ENCODE measurements at regions of chr4 and their contacts with region 1.

Region 1: DNA sequence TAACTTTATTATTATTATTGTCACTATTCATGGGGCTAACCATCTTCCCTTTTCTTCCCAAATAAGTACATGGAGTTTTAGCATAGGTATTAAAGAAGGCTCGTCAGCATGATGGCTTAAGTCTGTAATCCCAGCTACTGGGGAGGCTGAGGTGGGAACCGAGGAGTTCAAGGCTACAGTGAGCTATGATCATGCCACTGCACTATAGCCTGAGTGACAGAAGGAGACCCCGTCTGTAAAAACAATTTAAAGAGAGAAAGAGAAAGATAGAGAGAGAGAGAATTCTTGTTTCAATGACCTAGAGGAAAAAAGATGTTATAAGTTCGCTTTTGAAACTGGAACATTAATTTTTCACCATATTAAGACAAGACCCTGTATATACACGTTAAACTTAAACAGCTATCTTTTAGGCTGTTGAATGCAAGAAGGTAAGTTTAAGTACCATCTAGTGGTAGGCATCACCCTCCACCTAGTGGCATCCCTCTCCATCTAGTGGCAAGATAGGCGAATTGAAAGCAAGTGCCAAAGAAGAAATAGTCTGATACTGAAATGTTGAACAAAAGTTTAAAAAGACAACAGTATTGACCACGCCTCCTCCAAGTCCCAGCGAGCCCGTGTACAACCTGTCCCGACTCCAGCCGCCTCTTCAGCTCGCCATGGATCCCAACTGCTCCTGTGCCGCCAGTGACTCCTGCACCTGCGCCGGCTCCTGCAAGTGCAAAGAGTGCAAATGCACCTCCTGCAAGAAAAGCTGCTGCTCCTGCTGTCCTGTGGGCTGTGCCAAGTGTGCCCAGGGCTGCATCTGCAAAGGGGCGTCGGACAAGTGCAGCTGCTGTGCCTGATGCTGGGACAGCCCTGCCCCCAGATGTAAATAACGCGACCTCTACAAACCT is 26.0 kb upstream of the YTHDC1 start:
- DNase-seq: peak in 1 of 2 experiments; percentile 66
- H3K4me3 ChIP-seq: peak overlapping the region in 3 of 4 experiments; percentile 10 to 48 (median 26); a peak in 4 of 8 replicates
- H3K27ac ChIP-seq: no peak overlapping the region
- H3K4me1 ChIP-seq: peaks cover 2 to 12% (median 4%) of the 10 kb centered on the region in 4 experiments
- H3K27me3 ChIP-seq: no peaks in the 10 kb centered on the region
- CTCF ChIP-seq: peak in 2 of 3 experiments; percentile 87 to 97; a peak in 3 of 4 replicates
- EP300 ChIP-seq: no peak
- POLR2A ChIP-seq: no peak
- RAD21 ChIP-seq: peak; percentile 78 to 82

Region 2: DNA sequence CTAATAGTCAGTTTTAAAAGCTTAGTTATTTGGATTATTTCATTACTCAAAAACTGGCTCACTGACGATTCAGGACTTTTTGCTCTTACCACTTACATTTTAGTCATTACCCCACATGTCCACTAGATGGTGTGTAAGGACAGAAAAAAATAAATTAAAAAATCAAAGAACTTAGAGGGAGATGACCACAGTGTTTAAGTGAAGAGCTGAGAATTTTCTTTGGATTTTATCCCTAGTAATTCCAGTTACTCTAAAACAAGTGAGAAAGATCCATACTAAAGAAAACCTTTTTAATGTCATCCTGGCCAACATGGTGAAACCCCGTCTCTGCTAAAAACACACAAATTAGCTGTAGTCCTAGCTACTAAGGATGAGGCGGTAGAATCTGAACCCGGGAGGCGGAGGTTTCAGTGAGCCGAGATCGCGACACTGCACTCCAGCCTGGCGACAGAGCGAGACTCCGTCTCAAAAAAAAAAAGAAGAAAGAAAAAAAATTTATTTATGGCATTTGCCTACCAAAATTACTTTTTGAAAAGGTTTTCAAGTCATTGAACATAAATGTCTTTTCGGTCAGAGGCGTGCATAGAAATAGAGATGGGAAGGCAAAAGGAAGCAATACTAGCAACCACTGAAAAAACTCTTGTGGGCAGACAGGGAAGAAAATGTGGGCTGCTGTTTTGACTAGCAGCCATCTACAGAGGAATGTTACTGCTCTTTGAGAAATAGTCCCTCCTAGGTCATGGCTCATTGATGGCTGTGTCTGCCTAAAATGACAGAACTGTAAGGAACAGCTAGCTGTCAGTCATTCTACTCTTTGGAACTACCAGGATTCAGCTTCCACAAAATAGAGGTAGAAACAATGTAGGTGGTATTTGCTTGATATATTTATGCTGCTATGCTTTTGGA is 103.8 kb before region 1 on chr4:
- CTCF ChIA-PET with region 1: interaction called, 18 read pairs
- POLR2A ChIA-PET with region 1: no interaction called
- DNase-seq: no peak
- H3K4me3 ChIP-seq: peak overlapping the region in 2 of 4 experiments; percentile 8 to 48; a peak in 4 of 8 replicates
- H3K27ac ChIP-seq: peak overlapping the region; percentile 7; the same call in 1 of the 2 replicates
- H3K4me1 ChIP-seq: peaks cover 2 to 15% (median 8%) of the 10 kb centered on the region in 4 experiments; a peak in 4 of 7 replicates
- H3K27me3 ChIP-seq: no peaks in the 10 kb centered on the region
- CTCF ChIP-seq: peak in 2 of 3 experiments; percentile 38 to 46; a peak in 2 of 4 replicates
- EP300 ChIP-seq: no peak
- POLR2A ChIP-seq: no peak
- RAD21 ChIP-seq: peak; percentile 66 to 71

Region 3: DNA sequence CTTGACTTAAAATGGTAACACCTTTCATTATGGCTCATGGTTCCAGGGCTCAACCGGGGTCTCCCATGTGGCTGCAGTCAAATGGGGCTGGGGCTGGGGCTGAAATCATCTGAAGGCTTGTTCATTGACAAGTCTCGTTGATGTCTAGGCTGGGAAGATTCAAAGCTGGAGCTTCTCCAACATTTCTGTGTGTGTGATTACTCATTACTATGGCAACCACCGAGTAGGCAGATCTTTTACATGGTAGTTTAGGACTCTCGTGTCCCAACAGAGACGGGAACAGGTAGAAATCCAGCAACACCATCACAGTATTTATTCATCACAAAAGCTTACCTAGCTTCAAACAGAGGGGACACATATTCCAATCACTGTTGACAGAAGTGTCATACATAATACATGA is 33.8 kb before region 1 on chr4:
- CTCF ChIA-PET with region 1: interaction called, 21 read pairs
- POLR2A ChIA-PET with region 1: interaction called, 4 read pairs
- DNase-seq: no peak
- H3K4me3 ChIP-seq: no peak overlapping the region
- H3K27ac ChIP-seq: no peak overlapping the region
- H3K4me1 ChIP-seq: peaks cover 2 to 15% (median 8%) of the 10 kb centered on the region in 4 experiments; a peak in 5 of 7 replicates
- H3K27me3 ChIP-seq: no peaks in the 10 kb centered on the region
- CTCF ChIP-seq: no peak
- EP300 ChIP-seq: no peak
- POLR2A ChIP-seq: no peak
- RAD21 ChIP-seq: no peak

Region 4: DNA sequence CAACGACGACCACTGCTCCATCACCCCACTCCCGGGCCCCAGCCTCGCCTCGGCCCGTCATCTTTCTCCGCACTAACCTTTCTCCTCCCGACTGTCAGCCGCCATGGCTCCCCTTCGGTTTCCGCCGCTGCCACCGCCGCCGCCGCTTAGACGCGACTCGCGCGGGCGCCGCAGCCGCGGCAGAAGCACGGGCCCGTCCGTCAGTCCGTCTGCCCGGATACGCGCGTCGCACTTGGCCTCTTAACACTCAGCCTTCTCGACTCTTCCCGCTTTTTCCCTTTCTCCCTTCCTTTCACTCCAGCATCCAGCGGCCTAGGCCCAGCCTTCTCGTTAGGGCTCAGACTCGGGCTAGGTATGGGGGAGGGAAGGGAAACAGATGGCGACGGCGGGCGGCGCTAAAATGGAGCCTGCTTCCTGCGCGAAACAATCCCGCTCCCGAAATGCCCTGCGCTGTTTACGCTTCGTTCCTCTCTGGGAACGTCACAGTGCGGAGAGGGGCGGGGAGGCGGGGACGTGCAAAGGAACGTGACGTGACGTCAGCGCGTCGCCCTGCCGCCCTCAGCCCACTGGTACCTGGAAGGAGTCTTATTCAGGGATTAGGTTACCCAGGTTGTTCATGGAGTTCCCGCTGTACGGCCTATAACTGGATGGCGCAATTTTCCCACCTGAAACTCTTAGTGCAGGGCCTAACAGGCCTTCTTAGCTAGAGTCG is 26.1 kb before region 1 on chr4 and contains the start of gene YTHDC1:
- CTCF ChIA-PET with region 1: interaction called, 21 read pairs
- POLR2A ChIA-PET with region 1: interaction called, 3 read pairs
- DNase-seq: peak; percentile 88 to 93
- H3K4me3 ChIP-seq: peak within 1 kb of the TSS; percentile 88 to 94 (median 92)
- H3K27ac ChIP-seq: peak within 1 kb of the TSS; percentile 96
- H3K4me1 ChIP-seq: peaks cover 0 to 8% (median 3%) of the 10 kb centered on the region in 4 experiments; a peak in 4 of 7 replicates
- H3K27me3 ChIP-seq: no peaks in the 10 kb centered on the region
- CTCF ChIP-seq: no peak
- EP300 ChIP-seq: peak in 1 of 2 experiments; percentile 73; a peak in 1 of 3 replicates
- POLR2A ChIP-seq: peak; percentile 91 to 95
- RAD21 ChIP-seq: no peak
- total RNA-seq, gene YTHDC1: 89.5 and 94.5 TPM in 2 replicates

Region 5: DNA sequence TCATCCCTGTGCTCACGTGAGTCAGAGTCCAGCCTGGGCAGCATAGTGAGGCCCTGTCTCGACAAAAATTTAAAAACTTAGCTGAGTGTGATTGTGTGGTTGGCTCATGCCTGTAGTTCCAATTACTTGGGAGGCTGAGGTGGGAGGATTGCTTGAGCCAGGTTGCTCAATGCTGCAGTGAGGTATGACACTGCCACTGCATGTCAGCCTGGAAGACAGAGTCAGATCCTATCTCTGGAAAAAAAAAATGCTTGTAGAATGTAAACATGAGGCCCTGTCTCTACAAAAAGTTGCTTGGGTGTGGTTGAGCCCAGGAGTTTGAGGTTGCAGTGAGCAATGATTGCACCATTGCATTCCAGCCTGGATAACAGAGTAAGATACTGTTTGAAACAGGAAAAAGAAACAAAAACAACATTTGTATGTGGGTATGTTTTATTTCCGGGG is 14.7 kb before region 1 on chr4:
- CTCF ChIA-PET with region 1: interaction called, 26 read pairs
- POLR2A ChIA-PET with region 1: interaction called, 3 read pairs
- DNase-seq: no peak
- H3K4me3 ChIP-seq: no peak overlapping the region
- H3K27ac ChIP-seq: no peak overlapping the region
- H3K4me1 ChIP-seq: no peaks in the 10 kb centered on the region
- H3K27me3 ChIP-seq: peaks cover 0 to 10% (median under 1%) of the 10 kb centered on the region in 4 experiments; a peak in 5 of 7 replicates
- CTCF ChIP-seq: no peak
- EP300 ChIP-seq: no peak
- POLR2A ChIP-seq: no peak
- RAD21 ChIP-seq: no peak

Region 6: GRCh38 chr4:68390205-68390935 is 14.5 kb after region 1 on chr4:
- CTCF ChIA-PET with region 1: interaction called, 30 read pairs
- POLR2A ChIA-PET with region 1: no interaction called
- DNase-seq: no peak
- H3K4me3 ChIP-seq: no peak overlapping the region
- H3K27ac ChIP-seq: no peak overlapping the region
- H3K4me1 ChIP-seq: peaks cover 0 to 12% (median 2%) of the 10 kb centered on the region in 4 experiments; a peak in 3 of 7 replicates
- H3K27me3 ChIP-seq: no peaks in the 10 kb centered on the region
- CTCF ChIP-seq: no peak
- EP300 ChIP-seq: no peak
- POLR2A ChIP-seq: no peak
- RAD21 ChIP-seq: no peak

Region 7: GRCh38 chr4:68683005-68683404 is 307.1 kb after region 1 on chr4:
- CTCF ChIA-PET with region 1: no interaction called
- POLR2A ChIA-PET with region 1: no interaction called
- DNase-seq: no peak
- H3K4me3 ChIP-seq: no peak overlapping the region
- H3K27ac ChIP-seq: no peak overlapping the region
- H3K4me1 ChIP-seq: 0 out of 7 replicates have a peak, but pooled peaks cover 0 to 2% (median 0%) of the 10 kb centered on the region in 4 experiments
- H3K27me3 ChIP-seq: no peaks in the 10 kb centered on the region
- CTCF ChIP-seq: no peak
- EP300 ChIP-seq: no peak
- POLR2A ChIP-seq: no peak
- RAD21 ChIP-seq: no peak